Thyroid gland (tissue), 4 donors: ENCODE measurements at regions of chr2 and their contacts with region 1.

Region 1: GRCh38 chr2:85826990-85827878 is 61.6 kb downstream of the ST3GAL5 start:
- DNase-seq: peak; percentile 78 to 83
- H3K4me3 ChIP-seq: no peak overlapping the region
- H3K27ac ChIP-seq: peak overlapping the region; percentile 25 to 78 (median 54)
- H3K4me1 ChIP-seq: peaks cover 0 to 10% of the 10 kb centered on the region in 2 donors
- H3K27me3 ChIP-seq: no peaks in the 10 kb centered on the region
- CTCF ChIP-seq: peak; percentile 79 to 98 (median 96)
- POLR2A ChIP-seq: no peak

Region 2: GRCh38 chr2:85888684-85889626 is 61.7 kb after region 1 on chr2 and contains the start of gene ST3GAL5:
- intact Hi-C with region 1: loop called (anchors 5 kb)
- DNase-seq: peak; percentile 95
- H3K4me3 ChIP-seq: peak within 1 kb of the TSS; percentile 51 to 85 (median 82)
- H3K27ac ChIP-seq: peak within 1 kb of the TSS; percentile 88 to 98 (median 97)
- H3K4me1 ChIP-seq: peaks cover 55 to 75% of the 10 kb centered on the region in 2 donors
- H3K27me3 ChIP-seq: no peaks in the 10 kb centered on the region
- CTCF ChIP-seq: peak; percentile 34 to 82 (median 64)
- POLR2A ChIP-seq: peak; percentile 39 to 94
- total RNA-seq, gene ST3GAL5: 139 to 199 (median 156) TPM

Region 3: GRCh38 chr2:86079981-86080911 is 253.0 kb after region 1 on chr2:
- intact Hi-C with region 1: loop called (anchors 2 kb)
- DNase-seq: peak; percentile 82 to 87
- H3K4me3 ChIP-seq: no peak overlapping the region
- H3K27ac ChIP-seq: peak overlapping the region in 1 of 3 donors; percentile 31
- H3K4me1 ChIP-seq: peaks cover 16 to 30% of the 10 kb centered on the region in 2 donors
- H3K27me3 ChIP-seq: no peaks in the 10 kb centered on the region
- CTCF ChIP-seq: peak; percentile 74 to 85 (median 80)
- POLR2A ChIP-seq: no peak

Region 4: GRCh38 chr2:86368161-86368824 is 541.1 kb after region 1 on chr2:
- intact Hi-C with region 1: no loop called
- DNase-seq: peak; percentile 17 to 28
- H3K4me3 ChIP-seq: no peak overlapping the region
- H3K27ac ChIP-seq: no peak overlapping the region
- H3K4me1 ChIP-seq: no peaks in the 10 kb centered on the region
- H3K27me3 ChIP-seq: no peaks in the 10 kb centered on the region
- CTCF ChIP-seq: peak in 5 of 6 experiments; percentile 42 to 67 (median 64)
- POLR2A ChIP-seq: no peak